ENCODE measurements at regions of chr2 and their contacts with region 1.

Region 1: DNA sequence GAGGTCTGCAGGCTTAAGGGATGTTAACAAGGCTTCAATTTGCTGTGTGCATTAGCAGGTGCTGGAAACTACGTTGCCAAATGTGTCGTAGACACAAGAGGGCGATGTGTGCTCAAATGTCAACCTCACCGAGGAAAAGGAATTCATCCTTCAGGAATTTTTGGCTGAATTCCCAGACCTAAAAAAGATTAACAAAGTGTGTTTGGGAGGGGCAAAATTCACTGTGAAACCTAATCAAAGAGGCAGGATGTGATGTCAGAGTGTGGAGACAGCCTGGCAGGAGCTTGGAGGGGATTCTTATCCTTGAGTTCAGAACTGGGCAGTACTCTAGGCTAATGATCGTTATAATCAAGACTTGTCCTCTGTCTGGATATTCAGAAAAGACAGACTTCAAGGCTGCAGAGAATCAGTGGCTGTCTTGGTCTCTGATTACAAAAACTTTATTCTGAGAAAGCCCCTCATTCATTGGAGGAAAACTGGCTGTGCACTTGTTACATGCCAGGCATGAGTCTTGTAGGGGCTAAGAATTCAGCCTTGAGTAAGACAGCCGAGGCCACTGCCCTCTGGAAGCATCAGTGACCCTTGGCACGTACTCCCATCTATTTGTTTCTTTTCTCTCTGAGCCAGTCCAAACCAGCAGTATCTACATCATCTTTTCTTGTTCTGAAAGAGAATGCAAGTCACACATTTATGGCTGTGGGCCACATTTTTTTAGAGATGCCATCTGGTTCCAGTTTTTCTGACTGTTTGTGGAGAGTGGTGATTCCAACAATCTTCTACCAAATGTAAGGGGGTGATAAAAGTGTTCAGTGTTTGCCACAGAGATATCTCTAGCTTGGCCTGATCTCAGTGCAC is 18.7 kb upstream of the SCYGR1 start:
- DNase-seq: peak in 2 of 3 donors; percentile 41 to 45
- H3K4me3 ChIP-seq: peak overlapping the region in 1 of 3 experiments; percentile 65
- H3K4me3 Mint-ChIP-seq: peak overlapping the region; percentile 45 to 53
- H3K27ac ChIP-seq: peak overlapping the region; percentile 50 to 85
- H3K27ac Mint-ChIP-seq: peak overlapping the region; percentile 90 to 98 (median 97)
- H3K4me1 ChIP-seq: peaks cover 62 to 65% of the 10 kb centered on the region in 2 donors
- H3K4me1 Mint-ChIP-seq: peaks cover 67% of the 10 kb centered on the region
- H3K27me3 ChIP-seq: no peaks in the 10 kb centered on the region
- H3K27me3 Mint-ChIP-seq: peaks cover 0 to 4% (median 0%) of the 10 kb centered on the region in 3 donors
- CTCF ChIP-seq: peak; percentile 61

Region 2: GRCh38 chr2:227436436-227437174 is 30.2 kb after region 1 on chr2:
- intact Hi-C with region 1: loop called in 1 of 2 experiments (anchors 5 kb)
- DNase-seq: peak; percentile 78 to 89 (median 86)
- H3K4me3 ChIP-seq: peak overlapping the region in 1 of 3 experiments; percentile 48
- H3K4me3 Mint-ChIP-seq: peak overlapping the region in 1 of 2 donors; percentile 46
- H3K27ac ChIP-seq: peak overlapping the region; percentile 73 to 82
- H3K27ac Mint-ChIP-seq: peak overlapping the region; percentile 90 to 99 (median 97)
- H3K4me1 ChIP-seq: peaks cover 38 to 67% of the 10 kb centered on the region in 2 donors
- H3K4me1 Mint-ChIP-seq: peaks cover 51% of the 10 kb centered on the region
- H3K27me3 ChIP-seq: no peaks in the 10 kb centered on the region
- H3K27me3 Mint-ChIP-seq: no peaks in the 10 kb centered on the region
- CTCF ChIP-seq: no peak

Region 3: DNA sequence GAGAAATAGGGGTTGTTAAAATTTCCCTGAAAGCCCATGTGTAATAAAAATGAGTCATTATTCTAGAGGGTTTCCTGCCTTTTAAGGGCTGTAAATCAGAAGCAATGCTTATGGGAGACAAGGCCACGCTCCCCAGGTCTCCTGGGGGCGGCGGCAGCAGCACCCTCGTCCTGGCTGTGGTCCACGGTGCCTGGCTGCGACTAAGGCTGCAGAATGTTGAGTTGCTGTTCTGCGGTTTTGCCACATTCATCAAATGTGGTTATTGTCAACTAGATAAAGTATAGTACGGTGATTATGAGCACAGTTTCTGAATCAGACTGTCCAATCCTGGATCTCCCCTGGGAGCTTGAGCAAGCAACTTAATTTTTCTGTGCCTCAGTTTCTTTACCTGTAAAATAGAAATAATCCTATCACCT is 53.7 kb after region 1 on chr2:
- intact Hi-C with region 1: loop called in 1 of 2 experiments (anchors 10 kb)
- DNase-seq: peak; percentile 34 to 72 (median 58)
- H3K4me3 ChIP-seq: peak overlapping the region in 1 of 3 experiments; percentile 26
- H3K4me3 Mint-ChIP-seq: peak overlapping the region; percentile 48 to 49
- H3K27ac ChIP-seq: no peak overlapping the region
- H3K27ac Mint-ChIP-seq: peak overlapping the region in 3 of 7 donors; percentile 19 to 48 (median 21)
- H3K4me1 ChIP-seq: peaks cover 8 to 39% of the 10 kb centered on the region in 2 donors
- H3K4me1 Mint-ChIP-seq: peaks cover 48% of the 10 kb centered on the region
- H3K27me3 ChIP-seq: no peaks in the 10 kb centered on the region
- H3K27me3 Mint-ChIP-seq: peaks cover 2% of the 10 kb centered on the region in 3 donors
- CTCF ChIP-seq: no peak

Region 4: GRCh38 chr2:227643990-227644551 is 237.7 kb after region 1 on chr2:
- intact Hi-C with region 1: no loop called
- DNase-seq: no peak
- H3K4me3 ChIP-seq: no peak overlapping the region
- H3K4me3 Mint-ChIP-seq: no peak overlapping the region
- H3K27ac ChIP-seq: no peak overlapping the region
- H3K27ac Mint-ChIP-seq: no peak overlapping the region
- H3K4me1 ChIP-seq: no peaks in the 10 kb centered on the region
- H3K4me1 Mint-ChIP-seq: no peaks in the 10 kb centered on the region
- H3K27me3 ChIP-seq: no peaks in the 10 kb centered on the region
- H3K27me3 Mint-ChIP-seq: peaks cover 3 to 10% (median 10%) of the 10 kb centered on the region in 3 donors
- CTCF ChIP-seq: no peak

Measured in CD14-positive monocyte (primary cell).